Mammary epithelial cell (primary cell): ENCODE measurements at regions of chr2 and their contacts with region 1.

Region 1: DNA sequence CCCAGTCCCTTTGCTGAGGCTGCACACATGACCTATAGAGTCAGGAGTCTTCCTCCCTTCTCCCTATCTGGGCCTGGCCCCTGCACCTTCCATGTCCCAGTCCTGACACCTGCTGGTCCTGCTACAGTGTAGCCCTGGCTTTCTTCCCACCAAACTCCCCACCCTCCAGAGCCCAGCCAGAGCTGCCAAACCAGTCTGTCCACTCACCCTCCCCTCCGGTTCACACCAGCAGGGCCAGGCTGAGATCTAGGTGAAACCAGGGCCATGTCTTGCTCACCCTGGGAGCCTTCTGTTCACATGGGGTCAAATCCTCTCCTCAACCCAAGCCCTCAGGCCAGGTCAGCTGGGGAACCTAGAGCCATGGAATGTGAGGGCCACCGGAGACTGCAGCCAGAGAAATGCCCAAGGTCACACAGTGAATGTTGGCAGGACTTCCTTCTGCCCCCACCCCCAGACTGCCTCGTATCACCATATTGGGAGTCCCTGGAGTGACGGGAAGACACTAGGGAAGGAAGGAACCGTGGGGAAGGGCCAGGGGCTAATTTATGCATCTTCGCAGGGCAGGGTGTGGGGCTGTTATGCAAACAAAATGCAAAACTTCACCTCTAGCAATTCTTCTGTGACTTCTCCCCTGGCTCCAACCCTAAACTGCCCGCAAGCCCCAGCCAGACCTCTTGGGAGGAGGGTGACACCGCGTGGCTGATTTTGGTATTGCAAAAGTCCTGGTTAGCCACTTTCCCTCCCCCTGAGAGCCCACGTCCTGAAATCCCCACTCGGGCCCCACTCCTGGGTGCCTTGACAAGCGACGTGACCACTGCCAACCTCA is 14.6 kb downstream of the TNS1 start:
- DNase-seq: peak; percentile 68
- H3K4me3 ChIP-seq: no peak overlapping the region
- H3K27ac ChIP-seq: no peak overlapping the region
- H3K4me1 ChIP-seq: peaks cover 5% of the 10 kb centered on the region
- H3K27me3 ChIP-seq: no peaks in the 10 kb centered on the region
- CTCF ChIP-seq: peak; percentile 71 to 84

Region 2: DNA sequence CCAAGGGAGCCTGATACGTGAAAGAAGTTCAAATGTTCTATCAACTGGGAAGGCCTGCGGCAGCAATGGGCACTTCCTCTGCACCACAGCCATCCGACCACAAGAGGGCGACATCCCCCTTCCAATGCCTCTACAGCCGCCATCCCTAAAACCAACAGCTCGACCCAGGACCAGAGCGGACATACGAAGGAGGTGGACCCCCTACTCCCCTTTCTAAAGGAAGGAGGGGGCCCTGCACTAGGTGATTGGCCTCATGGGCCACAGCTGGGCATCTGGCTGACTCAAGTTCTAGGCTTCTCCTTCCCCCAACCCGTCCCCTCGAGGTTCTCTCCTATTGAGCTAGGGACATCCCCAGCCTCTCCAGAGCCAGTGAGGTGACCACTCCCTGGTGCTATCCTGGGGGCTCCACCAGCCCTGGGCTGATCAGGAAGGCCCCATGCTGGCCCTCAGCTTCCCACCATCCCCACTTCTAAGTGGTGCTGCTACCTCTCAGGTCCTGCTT is 202.6 kb before region 1 on chr2:
- CTCF ChIA-PET with region 1: interaction called, 8 read pairs
- dilution Hi-C with region 1: loop called (anchors 5 kb)
- in situ Hi-C with region 1: loop called (anchors 5 to 10 kb)
- intact Hi-C with region 1: loop called (anchors 1 kb)
- DNase-seq: peak; percentile 37
- H3K4me3 ChIP-seq: no peak overlapping the region
- H3K27ac ChIP-seq: no peak overlapping the region
- H3K4me1 ChIP-seq: peaks cover 4% of the 10 kb centered on the region
- H3K27me3 ChIP-seq: no peaks in the 10 kb centered on the region
- CTCF ChIP-seq: peak; percentile 92 to 97

Region 3: DNA sequence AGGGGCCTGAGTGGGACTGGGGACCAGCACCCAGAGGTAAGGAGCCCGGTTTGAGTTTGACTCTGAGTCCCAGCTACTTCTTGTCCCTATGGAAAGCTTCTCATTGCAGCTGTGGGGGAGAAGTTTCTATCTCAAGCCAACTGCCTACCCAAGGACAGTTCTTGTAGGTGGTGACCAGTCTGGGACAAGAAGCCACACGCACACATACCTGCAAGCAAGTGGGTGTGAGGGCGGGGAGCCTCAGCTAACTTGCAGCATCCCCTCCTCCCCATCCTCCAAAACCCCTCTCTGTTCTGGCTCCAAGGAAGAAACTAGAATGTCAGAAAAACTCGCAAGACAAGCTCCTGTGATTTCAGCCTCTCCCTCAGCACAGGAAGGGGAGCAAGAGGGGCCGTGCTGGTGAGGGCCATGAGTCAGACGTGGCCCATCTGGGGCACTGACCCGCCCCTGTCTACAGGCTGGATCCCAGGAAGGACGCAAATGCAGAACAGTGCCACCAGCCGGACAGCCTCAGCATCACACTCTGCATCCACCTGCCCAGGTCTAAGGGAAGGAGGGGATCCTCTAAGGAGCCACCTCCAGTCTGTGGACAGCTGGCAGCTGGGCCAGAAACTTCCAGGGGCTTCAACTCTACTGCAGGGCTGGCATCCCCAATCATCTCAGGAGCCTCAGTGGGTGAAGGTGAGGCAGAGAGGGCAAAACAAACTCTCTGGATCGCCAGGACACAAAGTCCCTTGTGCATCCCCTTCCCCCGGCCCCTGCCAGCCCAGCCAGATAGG is 88.8 kb before region 1 on chr2:
- CTCF ChIA-PET with region 1: interaction called, 3 read pairs
- dilution Hi-C with region 1: loop called (anchors 5 kb)
- in situ Hi-C with region 1: loop called in 1 of 2 experiments (anchors 10 kb)
- intact Hi-C with region 1: no loop called
- DNase-seq: peak; percentile 76
- H3K4me3 ChIP-seq: no peak overlapping the region
- H3K27ac ChIP-seq: no peak overlapping the region
- H3K4me1 ChIP-seq: peaks cover 26% of the 10 kb centered on the region
- H3K27me3 ChIP-seq: peaks cover 3% of the 10 kb centered on the region
- CTCF ChIP-seq: peak; percentile 74 to 79

Region 4: GRCh38 chr2:218003981-218004419 is 15.8 kb after region 1 on chr2:
- CTCF ChIA-PET with region 1: no interaction called
- dilution Hi-C with region 1: no loop called
- in situ Hi-C with region 1: no loop called
- intact Hi-C with region 1: no loop called
- DNase-seq: no peak
- H3K4me3 ChIP-seq: no peak overlapping the region
- H3K27ac ChIP-seq: no peak overlapping the region
- H3K4me1 ChIP-seq: peaks cover 6% of the 10 kb centered on the region
- H3K27me3 ChIP-seq: peaks cover 3% of the 10 kb centered on the region
- CTCF ChIP-seq: no peak

Region 5: DNA sequence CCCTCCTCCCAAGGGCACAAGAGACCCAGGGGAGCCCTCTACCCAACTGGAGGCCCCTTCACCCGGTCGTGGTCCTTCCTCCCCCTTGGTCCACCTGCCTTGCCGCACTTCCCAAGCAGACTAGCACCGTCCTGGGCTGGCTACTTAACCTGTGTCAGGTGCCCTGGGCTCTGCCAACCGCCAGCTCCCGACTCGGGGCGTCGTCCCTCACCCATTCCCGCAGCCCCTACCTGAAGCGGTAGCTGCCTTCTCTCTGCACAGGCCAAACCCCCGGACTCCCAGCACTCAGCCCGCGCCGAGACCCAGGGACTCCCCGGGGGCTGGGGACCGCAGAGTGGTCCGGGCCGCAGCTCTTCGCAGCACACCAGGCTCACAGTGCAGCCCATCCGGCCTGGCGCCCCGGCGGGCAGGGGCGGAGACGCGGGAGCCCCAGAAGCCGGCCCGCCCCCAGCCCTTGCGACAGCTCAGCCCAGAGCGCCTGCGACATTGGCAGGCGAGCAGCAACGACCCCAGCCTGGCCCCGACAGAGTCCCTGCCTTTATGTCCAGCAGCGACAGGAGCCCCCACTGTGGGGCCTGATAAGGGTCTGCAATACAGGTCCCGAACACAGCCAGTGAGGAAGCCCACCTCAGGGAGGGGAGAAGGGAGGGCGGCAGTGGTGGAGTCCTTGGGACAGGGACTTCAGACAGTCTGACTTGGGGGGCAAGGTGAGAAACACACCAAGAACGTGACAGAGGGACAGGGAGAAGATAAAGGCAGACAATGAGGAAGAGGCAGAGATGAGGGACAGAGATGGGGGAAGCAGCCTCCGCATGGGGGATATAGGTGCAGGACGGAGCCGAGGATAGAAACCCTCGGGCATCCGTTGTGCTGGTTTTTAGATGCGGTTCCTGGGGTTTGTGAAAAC is 45.6 kb after region 1 on chr2:
- CTCF ChIA-PET with region 1: no interaction called
- dilution Hi-C with region 1: loop called (anchors 5 kb)
- in situ Hi-C with region 1: no loop called
- intact Hi-C with region 1: loop called (anchors 2 kb)
- DNase-seq: no peak
- H3K4me3 ChIP-seq: no peak overlapping the region
- H3K27ac ChIP-seq: no peak overlapping the region
- H3K4me1 ChIP-seq: peaks cover 17% of the 10 kb centered on the region
- H3K27me3 ChIP-seq: no peaks in the 10 kb centered on the region
- CTCF ChIP-seq: no peak